ENCODE measurements at regions of chr2 and their contacts with region 1.

Region 1: DNA sequence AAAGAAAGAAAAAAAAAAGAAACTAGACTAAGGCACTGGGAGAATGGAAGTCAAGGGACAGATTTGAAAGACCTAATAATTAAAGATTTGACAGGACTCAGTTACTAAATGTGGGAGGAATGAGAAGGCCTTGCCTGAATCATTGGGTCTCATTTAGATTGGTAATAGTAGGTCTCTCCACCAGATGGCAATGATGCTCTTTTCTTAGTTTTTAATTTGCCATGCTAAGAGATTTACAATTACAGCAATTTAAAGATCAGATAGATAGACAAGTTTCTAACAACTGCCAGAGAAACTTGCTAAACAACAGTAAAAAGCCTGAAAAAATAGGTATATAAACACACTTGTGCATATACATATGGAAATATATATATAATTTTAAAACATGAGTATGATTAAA is 153.0 kb downstream of the TMEM247 start:
- DNase-seq: no peak
- ATAC-seq: peak; percentile 61

Region 2: GRCh38 chr2:46887028-46887885 is 254.9 kb after region 1 on chr2:
- intact Hi-C with region 1: loop called in 1 of 2 experiments (anchors 5 kb)
- DNase-seq: no peak
- ATAC-seq: no peak

Measured in left colon (tissue), 2 donors.